BJ (cell line): ENCODE measurements at regions of chr11 and their contacts with region 1.

Region 1: DNA sequence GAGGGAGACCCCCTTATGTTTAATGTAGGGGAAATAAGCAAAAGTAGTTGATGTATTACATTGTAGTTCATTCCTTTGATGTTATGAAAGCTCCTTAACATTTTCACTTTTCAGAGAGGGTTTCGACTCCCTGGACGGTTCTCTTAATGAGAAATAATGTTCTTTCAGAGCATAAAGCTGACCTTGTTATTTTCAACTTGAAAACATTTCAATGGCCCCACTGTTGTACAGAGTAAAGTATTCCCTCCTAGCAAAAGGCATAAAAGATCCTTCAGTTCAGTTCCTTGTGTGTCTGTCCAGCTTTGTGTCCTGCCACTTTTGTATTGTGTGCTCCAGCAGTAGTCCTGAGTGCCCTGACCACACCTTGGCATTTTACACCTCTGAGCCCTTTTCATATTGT is 63.9 kb downstream of the UVRAG start:
- DNase-seq: no peak
- H3K4me3 ChIP-seq: no peak overlapping the region
- H3K27me3 ChIP-seq: no peaks in the 10 kb centered on the region
- CTCF ChIP-seq: no peak

Region 2: GRCh38 chr11:75820636-75821035 is 58.3 kb before region 1 on chr11:
- CTCF ChIA-PET with region 1: no interaction called
- POLR2A ChIA-PET with region 1: no interaction called
- DNase-seq: no peak
- H3K4me3 ChIP-seq: no peak overlapping the region
- H3K27me3 ChIP-seq: no peaks in the 10 kb centered on the region
- CTCF ChIP-seq: no peak

Region 3: GRCh38 chr11:75836417-75836816 is 42.5 kb before region 1 on chr11:
- CTCF ChIA-PET with region 1: no interaction called
- POLR2A ChIA-PET with region 1: no interaction called
- DNase-seq: no peak
- H3K4me3 ChIP-seq: no peak overlapping the region
- H3K27me3 ChIP-seq: no peaks in the 10 kb centered on the region
- CTCF ChIP-seq: no peak

Region 4: GRCh38 chr11:76172583-76172982 is 293.6 kb after region 1 on chr11:
- CTCF ChIA-PET with region 1: no interaction called
- POLR2A ChIA-PET with region 1: interaction called, 23 read pairs
- DNase-seq: no peak
- H3K4me3 ChIP-seq: no peak overlapping the region
- H3K27me3 ChIP-seq: peaks cover 5% of the 10 kb centered on the region
- CTCF ChIP-seq: no peak

Region 5: DNA sequence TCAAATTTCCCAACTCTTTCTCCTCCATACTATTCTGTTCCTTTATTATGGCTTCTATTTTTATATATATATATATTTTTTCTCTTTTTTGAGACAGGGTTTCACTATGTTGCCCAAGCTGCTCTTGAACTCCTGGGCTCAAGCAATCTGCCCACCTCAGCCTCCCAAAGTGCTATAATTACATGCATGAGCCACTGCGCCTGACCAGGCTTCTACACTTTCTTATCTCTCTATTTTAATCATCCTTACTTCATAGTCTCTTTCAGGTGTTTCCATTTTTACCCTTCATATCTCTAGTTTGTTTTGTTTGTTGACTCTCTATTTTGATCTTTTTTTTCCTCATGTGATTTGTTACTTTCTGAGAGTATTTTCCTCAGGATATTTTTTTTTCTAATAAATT is 522.0 kb after region 1 on chr11:
- CTCF ChIA-PET with region 1: no interaction called
- POLR2A ChIA-PET with region 1: interaction called, 17 read pairs
- DNase-seq: no peak
- H3K4me3 ChIP-seq: no peak overlapping the region
- H3K27me3 ChIP-seq: no peaks in the 10 kb centered on the region
- CTCF ChIP-seq: no peak